ENCODE measurements at regions of chrX and their contacts with region 1.

Region 1: DNA sequence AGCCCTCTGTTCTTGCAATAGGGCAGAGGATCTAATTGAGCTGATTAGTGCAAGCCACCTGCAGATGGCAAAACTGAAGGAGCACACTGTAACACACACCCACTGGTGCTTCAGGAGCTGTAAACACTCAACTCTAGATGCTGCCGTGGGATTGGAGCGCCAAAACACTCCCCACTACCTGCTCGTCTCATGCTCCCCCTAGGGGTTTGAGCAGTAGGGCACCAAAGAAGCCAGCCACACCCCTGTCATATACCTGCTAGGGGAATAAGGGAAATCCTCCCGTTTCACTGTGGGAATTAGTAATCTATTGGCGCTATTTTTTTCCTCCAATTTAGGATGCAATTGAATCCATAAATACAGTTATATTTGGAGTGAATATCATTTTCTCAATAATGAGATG is 360.2 kb downstream of the GLUD2 start:
- DNase-seq: no peak
- ATAC-seq: no peak
- H3K4me3 ChIP-seq: no peak overlapping the region
- H3K27ac ChIP-seq: no peak overlapping the region
- H3K4me1 ChIP-seq: no peaks in the 10 kb centered on the region
- H3K27me3 ChIP-seq: no peaks in the 10 kb centered on the region

Region 2: DNA sequence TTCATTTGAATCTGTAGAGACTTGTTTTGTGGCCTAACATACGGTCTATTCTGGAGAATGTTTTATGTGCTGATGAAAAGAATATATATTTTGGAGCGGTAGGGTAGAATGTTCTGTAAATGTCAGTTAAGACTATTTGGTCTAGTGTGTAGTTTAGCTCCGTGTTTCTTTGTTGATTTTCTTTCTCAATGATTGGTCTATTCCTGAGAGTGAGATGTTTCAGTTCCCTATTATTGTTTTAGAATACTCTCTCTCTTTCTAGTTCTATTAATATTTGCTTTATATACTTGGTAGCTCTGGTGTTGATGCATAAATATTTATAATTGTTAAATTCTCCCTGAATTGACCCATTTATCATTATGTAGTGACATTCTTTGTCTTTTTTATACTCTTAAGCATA is 123.7 kb before region 1 on chrX:
- intact Hi-C with region 1: no loop called
- DNase-seq: no peak
- ATAC-seq: no peak
- H3K4me3 ChIP-seq: no peak overlapping the region
- H3K27ac ChIP-seq: no peak overlapping the region
- H3K4me1 ChIP-seq: no peaks in the 10 kb centered on the region
- H3K27me3 ChIP-seq: no peaks in the 10 kb centered on the region

Region 3: DNA sequence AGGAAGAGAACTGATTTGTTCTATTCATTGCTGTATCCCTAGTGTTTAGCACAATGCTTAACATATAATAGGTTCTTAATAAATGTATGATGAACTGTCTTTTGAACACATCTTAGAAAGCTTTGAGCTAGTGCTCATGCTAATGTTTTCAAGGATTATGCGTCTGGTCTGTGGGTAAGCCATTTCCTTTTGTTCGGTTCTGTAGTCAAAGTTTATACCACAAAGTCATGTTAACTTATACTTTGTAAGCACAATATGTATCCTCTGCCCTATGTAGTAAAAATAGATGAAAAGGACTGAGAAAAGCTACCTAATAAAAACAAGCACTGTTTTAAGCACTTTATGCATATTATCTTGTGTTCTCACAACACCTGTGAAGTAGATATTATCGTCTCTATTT is 58.4 kb before region 1 on chrX:
- intact Hi-C with region 1: loop called in 1 of 2 experiments (anchors 10 kb)
- DNase-seq: no peak
- ATAC-seq: no peak
- H3K4me3 ChIP-seq: no peak overlapping the region
- H3K27ac ChIP-seq: no peak overlapping the region
- H3K4me1 ChIP-seq: no peaks in the 10 kb centered on the region
- H3K27me3 ChIP-seq: no peaks in the 10 kb centered on the region

Region 4: DNA sequence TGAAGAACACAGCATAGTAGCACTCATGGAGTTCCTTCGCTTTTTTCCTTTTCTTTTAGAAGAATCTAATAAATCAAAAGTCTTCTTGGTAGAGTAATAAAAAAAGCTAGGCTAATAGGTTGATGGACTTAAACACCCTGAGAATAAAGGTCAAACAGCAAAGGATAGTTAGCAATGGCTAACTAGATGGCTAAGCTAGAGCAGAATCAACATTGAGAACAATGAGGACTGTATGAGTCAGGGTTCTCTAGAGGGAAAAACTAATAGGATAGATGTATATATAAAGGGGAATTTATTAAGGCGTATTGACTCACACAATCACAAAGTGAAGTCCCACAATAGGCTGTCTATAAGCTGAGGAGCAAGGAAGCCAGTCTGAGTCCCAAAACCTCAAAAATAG is 190.7 kb after region 1 on chrX:
- intact Hi-C with region 1: no loop called
- DNase-seq: no peak
- ATAC-seq: no peak
- H3K4me3 ChIP-seq: no peak overlapping the region
- H3K27ac ChIP-seq: no peak overlapping the region
- H3K4me1 ChIP-seq: no peaks in the 10 kb centered on the region
- H3K27me3 ChIP-seq: no peaks in the 10 kb centered on the region

Region 5: DNA sequence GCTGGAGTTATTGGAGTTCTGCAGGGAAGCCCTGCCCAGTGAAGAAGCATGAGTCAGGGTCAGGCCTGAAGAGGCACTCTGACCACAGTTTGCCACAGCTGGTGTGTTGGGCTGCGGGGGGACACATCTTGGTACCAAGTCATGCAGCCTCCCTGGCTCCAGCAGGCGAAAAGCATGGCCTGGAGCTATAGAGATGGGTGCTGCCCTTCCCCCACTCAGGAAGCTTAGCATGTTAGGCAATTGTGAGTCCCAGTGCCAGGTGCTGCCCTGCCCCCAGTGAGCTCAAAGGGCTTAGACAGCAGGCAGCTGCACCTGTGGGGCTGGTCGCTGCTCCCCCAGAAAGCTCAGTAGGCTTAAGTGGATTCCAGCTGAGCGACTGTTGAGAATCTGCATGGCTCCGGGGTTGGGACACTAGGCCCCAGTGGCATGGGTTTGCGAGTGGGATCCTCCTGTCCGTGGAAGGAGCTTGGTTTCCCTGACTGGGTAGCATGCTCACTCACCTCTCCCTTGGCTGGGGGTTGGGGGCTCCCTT is 395.3 kb after region 1 on chrX:
- intact Hi-C with region 1: no loop called
- DNase-seq: no peak
- ATAC-seq: no peak
- H3K4me3 ChIP-seq: no peak overlapping the region
- H3K27ac ChIP-seq: no peak overlapping the region
- H3K4me1 ChIP-seq: no peaks in the 10 kb centered on the region
- H3K27me3 ChIP-seq: no peaks in the 10 kb centered on the region